Ascending aorta (tissue), 2 donors: ENCODE measurements at regions of chr2 and their contacts with region 1.

Region 1: DNA sequence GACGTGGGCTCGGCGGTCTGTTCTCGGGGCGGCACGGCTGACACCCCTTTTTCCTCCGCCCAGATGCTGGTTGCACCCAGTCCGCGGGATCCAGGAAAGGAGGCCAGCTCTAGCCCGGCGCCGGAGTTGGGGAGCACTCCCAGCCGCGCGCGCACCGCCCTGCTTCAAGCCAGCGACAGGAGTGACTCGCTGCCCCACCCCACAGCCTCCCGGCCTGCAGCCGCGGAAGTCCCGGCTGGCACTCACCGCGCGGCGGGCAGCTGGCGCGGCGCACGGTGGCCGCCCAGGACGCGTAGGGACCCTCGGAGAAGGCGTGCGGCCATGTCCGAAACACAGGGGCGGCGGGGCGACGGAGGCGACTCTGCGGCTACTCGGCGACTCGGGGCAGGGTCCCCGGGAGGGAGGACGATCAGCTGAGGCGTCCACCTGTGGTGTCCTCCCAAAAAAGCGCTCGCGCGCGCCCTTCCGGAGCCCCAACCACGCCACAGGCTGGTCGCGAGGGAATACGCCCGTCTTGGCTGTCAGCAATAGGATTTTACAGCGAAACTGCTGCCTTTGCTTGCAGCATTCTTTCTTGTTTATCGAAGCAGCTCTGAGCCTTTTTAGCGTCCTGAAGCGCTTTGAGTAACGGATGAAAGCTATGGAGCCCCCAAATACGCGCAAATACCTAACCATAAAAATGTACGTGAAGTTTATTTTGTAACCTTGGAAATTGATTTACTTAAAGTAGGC is at the start of gene ACADL:
- DNase-seq: peak in 1 of 2 donors; percentile 83
- H3K4me3 ChIP-seq: peak within 1 kb of the TSS; percentile 61 to 78
- H3K27ac ChIP-seq: peak within 1 kb of the TSS; percentile 94 to 95
- H3K4me1 ChIP-seq: peaks cover 0 to 13% of the 10 kb centered on the region in 2 donors
- H3K27me3 ChIP-seq: no peaks in the 10 kb centered on the region
- CTCF ChIP-seq: no peak
- total RNA-seq, gene ACADL: 18.5 TPM

Region 2: DNA sequence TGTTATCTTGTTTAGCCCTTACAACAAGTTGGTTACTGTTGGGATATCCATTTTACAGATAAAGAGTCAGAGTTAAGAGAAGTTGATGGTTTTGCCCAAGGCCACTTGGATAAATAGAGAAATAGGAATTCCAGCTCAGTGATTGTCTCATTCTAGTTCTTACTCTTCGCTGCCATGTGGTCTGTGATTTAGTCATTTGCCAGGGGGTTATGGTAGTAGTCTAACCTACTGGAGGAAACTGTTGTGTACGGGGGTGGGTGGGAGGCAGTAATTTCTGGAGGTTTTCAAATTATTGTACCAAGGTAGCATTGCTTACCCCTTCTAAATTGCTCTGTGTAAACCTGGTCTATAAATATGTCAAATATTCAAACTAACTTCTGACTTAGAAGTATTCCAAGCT is 690.9 kb before region 1 on chr2:
- intact Hi-C with region 1: loop called (anchors 10 kb)
- DNase-seq: no peak
- H3K4me3 ChIP-seq: no peak overlapping the region
- H3K27ac ChIP-seq: no peak overlapping the region
- H3K4me1 ChIP-seq: peaks cover 0 to 5% of the 10 kb centered on the region in 2 donors
- H3K27me3 ChIP-seq: no peaks in the 10 kb centered on the region
- CTCF ChIP-seq: no peak

Region 3: GRCh38 chr2:210171309-210172203 is 53.6 kb before region 1 on chr2 and contains the start of gene KANSL1L:
- intact Hi-C with region 1: loop called (anchors 2 kb)
- DNase-seq: peak; percentile 94 to 99
- H3K4me3 ChIP-seq: peak within 1 kb of the TSS; percentile 79 to 99
- H3K27ac ChIP-seq: peak within 1 kb of the TSS; percentile 98 to 100
- H3K4me1 ChIP-seq: peaks cover 6 to 19% of the 10 kb centered on the region in 2 donors
- H3K27me3 ChIP-seq: no peaks in the 10 kb centered on the region
- CTCF ChIP-seq: no peak
- total RNA-seq, gene KANSL1L: 39.6 TPM